Activated CD4-positive, alpha-beta memory T cell treated with anti-CD3 and anti-CD28 coated beads, Interleukin-2, amount 10 ng/mL, durations not matched to agents 7 days and 5 days (primary cell): ENCODE measurements at regions of chr4 and their contacts with region 1.

Region 1: GRCh38 chr4:89294573-89295269 is 12.9 kb downstream of the GPRIN3 start:
- DNase-seq: no peak
- H3K4me3 Mint-ChIP-seq: peak overlapping the region; percentile 75
- H3K27ac Mint-ChIP-seq: peak overlapping the region; percentile 98
- H3K4me1 Mint-ChIP-seq: peaks cover 87% of the 10 kb centered on the region
- H3K27me3 Mint-ChIP-seq: no peaks in the 10 kb centered on the region

Region 2: GRCh38 chr4:89254847-89255246 is 39.9 kb before region 1 on chr4:
- CTCF ChIA-PET with region 1: interaction called, 8 read pairs
- POLR2A ChIA-PET with region 1: interaction called, 13 read pairs
- DNase-seq: peak; percentile 50
- H3K4me3 Mint-ChIP-seq: no peak overlapping the region
- H3K27ac Mint-ChIP-seq: peak overlapping the region; percentile 52
- H3K4me1 Mint-ChIP-seq: peaks cover 75% of the 10 kb centered on the region
- H3K27me3 Mint-ChIP-seq: no peaks in the 10 kb centered on the region

Region 3: DNA sequence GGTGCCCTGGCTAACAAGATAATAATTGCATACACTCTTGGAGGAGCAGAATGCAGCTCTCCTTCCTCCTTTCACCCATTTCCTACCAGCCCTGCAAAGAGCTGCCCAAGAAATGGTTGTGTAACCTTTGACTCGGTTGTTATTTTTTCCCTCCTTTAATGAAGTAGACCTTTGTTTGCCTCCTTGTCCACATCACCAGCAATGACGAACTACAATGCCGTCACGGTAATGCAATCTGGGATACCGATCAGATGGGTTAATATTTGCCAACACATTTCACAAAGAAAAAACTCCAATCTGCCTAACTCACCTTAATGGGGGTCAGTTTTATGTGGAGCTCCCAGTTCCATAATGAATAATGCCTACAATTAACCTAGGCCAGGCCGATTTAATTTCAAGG is 19.1 kb before region 1 on chr4:
- CTCF ChIA-PET with region 1: no interaction called
- POLR2A ChIA-PET with region 1: interaction called, 26 read pairs
- DNase-seq: no peak
- H3K4me3 Mint-ChIP-seq: no peak overlapping the region
- H3K27ac Mint-ChIP-seq: no peak overlapping the region
- H3K4me1 Mint-ChIP-seq: peaks cover 69% of the 10 kb centered on the region
- H3K27me3 Mint-ChIP-seq: no peaks in the 10 kb centered on the region

Region 4: DNA sequence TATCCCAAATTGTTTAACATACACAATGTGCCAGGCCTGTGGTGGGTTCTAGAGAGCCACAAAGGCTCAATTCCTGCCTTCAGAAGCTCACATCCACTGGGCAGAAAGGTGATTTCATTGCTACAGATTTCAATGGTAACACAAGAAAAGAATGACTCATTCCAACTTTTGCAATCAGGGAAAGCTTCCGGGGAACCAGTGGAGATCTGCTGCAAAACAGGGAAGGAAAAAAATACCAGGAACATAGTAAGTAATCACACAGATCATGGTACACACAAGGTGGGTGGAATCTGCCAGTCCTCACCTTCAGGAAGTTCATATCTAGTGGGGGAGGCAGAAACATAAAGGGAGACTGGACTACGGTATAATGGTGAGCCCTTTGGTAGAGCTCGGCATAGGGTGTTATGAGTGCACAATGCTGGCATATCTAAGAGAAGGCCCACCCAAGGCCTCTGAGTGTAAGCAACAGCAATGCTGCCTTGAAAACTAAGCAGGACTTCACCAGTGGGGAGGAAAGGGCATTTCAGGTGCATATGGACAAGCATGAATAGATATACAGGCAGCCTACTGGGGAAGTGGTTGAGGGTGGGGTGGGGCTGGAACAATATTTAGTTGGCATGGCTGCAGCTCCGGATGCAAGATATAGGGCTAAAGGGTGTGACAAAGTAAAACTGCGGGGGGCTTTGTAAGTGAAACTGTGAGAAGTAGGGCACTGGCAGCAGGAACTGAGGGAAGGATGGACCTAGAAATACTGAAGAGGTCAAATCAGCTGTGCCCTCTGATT is 11.3 kb before region 1 on chr4:
- CTCF ChIA-PET with region 1: interaction called, 23 read pairs
- POLR2A ChIA-PET with region 1: interaction called, 516 read pairs
- DNase-seq: peak; percentile 75
- H3K4me3 Mint-ChIP-seq: peak overlapping the region; percentile 74
- H3K27ac Mint-ChIP-seq: peak overlapping the region; percentile 96
- H3K4me1 Mint-ChIP-seq: peaks cover 71% of the 10 kb centered on the region
- H3K27me3 Mint-ChIP-seq: no peaks in the 10 kb centered on the region

Region 5: GRCh38 chr4:89307446-89308160 is 12.9 kb after region 1 on chr4 and contains the start of gene GPRIN3:
- CTCF ChIA-PET with region 1: interaction called, 10 read pairs
- POLR2A ChIA-PET with region 1: interaction called, 516 read pairs
- DNase-seq: peak; percentile 63
- H3K4me3 Mint-ChIP-seq: peak within 1 kb of the TSS; percentile 93
- H3K27ac Mint-ChIP-seq: peak within 1 kb of the TSS; percentile 97
- H3K4me1 Mint-ChIP-seq: peaks cover 36% of the 10 kb centered on the region
- H3K27me3 Mint-ChIP-seq: no peaks in the 10 kb centered on the region
- total RNA-seq, gene GPRIN3: 102 to 106 TPM

Region 6: DNA sequence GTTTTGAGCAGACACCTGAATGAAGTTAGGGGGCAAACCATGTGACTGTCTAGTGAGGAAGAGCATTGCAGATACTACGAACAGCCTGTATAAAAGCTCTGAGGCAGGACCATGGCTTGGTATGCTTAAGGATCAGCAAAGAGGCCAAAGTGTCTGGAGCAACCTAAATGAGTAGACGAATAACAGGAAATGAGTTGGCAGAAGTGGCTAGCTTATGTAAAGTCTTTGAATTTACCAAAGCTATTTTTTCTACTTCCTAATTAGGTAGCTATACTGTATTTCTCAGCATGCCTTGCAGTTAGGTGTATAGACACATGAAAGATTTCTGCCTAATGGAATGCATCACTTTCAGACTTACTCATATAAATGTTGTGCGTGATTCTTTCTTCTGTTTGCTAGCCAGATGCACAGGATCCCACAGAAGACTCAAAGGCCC is 22.2 kb after region 1 on chr4:
- CTCF ChIA-PET with region 1: no interaction called
- POLR2A ChIA-PET with region 1: interaction called, 431 read pairs
- DNase-seq: peak; percentile 39
- H3K4me3 Mint-ChIP-seq: peak overlapping the region; percentile 50
- H3K27ac Mint-ChIP-seq: peak overlapping the region; percentile 91
- H3K4me1 Mint-ChIP-seq: peaks cover 41% of the 10 kb centered on the region
- H3K27me3 Mint-ChIP-seq: no peaks in the 10 kb centered on the region

Region 7: GRCh38 chr4:89434364-89434988 is 139.8 kb after region 1 on chr4:
- CTCF ChIA-PET with region 1: no interaction called
- POLR2A ChIA-PET with region 1: interaction called, 13 read pairs
- DNase-seq: no peak
- H3K4me3 Mint-ChIP-seq: no peak overlapping the region
- H3K27ac Mint-ChIP-seq: no peak overlapping the region
- H3K4me1 Mint-ChIP-seq: peaks cover 11% of the 10 kb centered on the region
- H3K27me3 Mint-ChIP-seq: peaks cover 2% of the 10 kb centered on the region